Natural killer cell (primary cell): ENCODE measurements at regions of chr16 and their contacts with region 1.

Region 1: GRCh38 chr16:75319513-75320411 is 68.3 kb upstream of the BCAR1 start:
- DNase-seq: peak in 1 of 2 donors; percentile 41
- ATAC-seq: peak in 2 of 3 donors; percentile 29 to 75
- H3K4me3 ChIP-seq: no peak overlapping the region
- H3K4me3 Mint-ChIP-seq: peak overlapping the region; percentile 69
- H3K27ac ChIP-seq: no peak overlapping the region
- H3K27ac Mint-ChIP-seq: peak overlapping the region in 1 of 2 donors; percentile 5
- H3K4me1 ChIP-seq: peaks cover 20% of the 10 kb centered on the region
- H3K4me1 Mint-ChIP-seq: peaks cover 23 to 31% of the 10 kb centered on the region in 2 donors
- H3K27me3 ChIP-seq: peaks cover 45% of the 10 kb centered on the region
- H3K27me3 Mint-ChIP-seq: peaks cover 46 to 64% of the 10 kb centered on the region in 2 donors
- CTCF ChIP-seq: no peak

Region 2: DNA sequence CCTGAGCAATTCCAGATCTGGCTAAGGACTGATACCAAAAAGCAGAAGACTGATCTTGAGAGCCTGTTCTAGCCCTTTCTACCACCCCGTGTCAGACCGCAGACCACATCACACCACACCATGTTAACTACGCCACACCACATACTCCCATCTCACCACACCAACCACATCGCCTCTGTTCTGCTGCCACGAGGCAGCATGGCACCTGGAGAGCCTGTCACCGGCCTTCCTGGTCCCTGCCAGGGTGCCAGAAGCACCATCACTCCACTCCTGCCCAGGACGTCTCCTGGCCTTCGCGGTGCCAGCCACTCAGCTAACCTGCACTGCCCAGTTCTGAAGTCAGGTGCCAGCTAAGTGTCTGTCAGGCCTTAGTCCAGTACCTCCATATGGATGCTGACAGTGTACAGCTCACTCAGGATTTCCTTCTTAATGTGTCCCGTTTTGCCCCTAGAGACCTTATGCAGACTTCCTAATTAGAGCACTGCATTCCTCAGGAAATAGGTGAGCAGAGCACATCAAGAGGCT is 31.1 kb before region 1 on chr16:
- intact Hi-C with region 1: loop called (anchors 5 kb)
- DNase-seq: peak; percentile 66 to 85
- ATAC-seq: peak; percentile 74 to 99 (median 92)
- H3K4me3 ChIP-seq: no peak overlapping the region
- H3K4me3 Mint-ChIP-seq: peak overlapping the region; percentile 73
- H3K27ac ChIP-seq: no peak overlapping the region
- H3K27ac Mint-ChIP-seq: peak overlapping the region; percentile 72 to 82
- H3K4me1 ChIP-seq: peaks cover 19% of the 10 kb centered on the region
- H3K4me1 Mint-ChIP-seq: peaks cover 13 to 22% of the 10 kb centered on the region in 2 donors
- H3K27me3 ChIP-seq: peaks cover 43% of the 10 kb centered on the region
- H3K27me3 Mint-ChIP-seq: peaks cover 69 to 84% of the 10 kb centered on the region in 2 donors
- CTCF ChIP-seq: no peak

Region 3: GRCh38 chr16:75379911-75380847 is 60.4 kb after region 1 on chr16:
- intact Hi-C with region 1: loop called (anchors 10 kb)
- DNase-seq: peak in 1 of 2 donors; percentile 74
- ATAC-seq: peak in 1 of 3 donors; percentile 57
- H3K4me3 ChIP-seq: no peak overlapping the region
- H3K4me3 Mint-ChIP-seq: no peak overlapping the region
- H3K27ac ChIP-seq: no peak overlapping the region
- H3K27ac Mint-ChIP-seq: peak overlapping the region in 1 of 2 donors; percentile 19
- H3K4me1 ChIP-seq: peaks cover 10% of the 10 kb centered on the region
- H3K4me1 Mint-ChIP-seq: peaks cover 23 to 32% of the 10 kb centered on the region in 2 donors
- H3K27me3 ChIP-seq: no peaks in the 10 kb centered on the region
- H3K27me3 Mint-ChIP-seq: peaks cover 0 to 11% of the 10 kb centered on the region in 2 donors
- CTCF ChIP-seq: no peak